ENCODE measurements at regions of chr9 and their contacts with region 1.

Region 1: GRCh38 chr9:35071814-35072460 is 488 bp downstream of the VCP start:
- DNase-seq: peak; percentile 87 to 94 (median 91)
- ATAC-seq: peak; percentile 43 to 85 (median 79)
- H3K4me3 ChIP-seq: peak overlapping the region; percentile 82 to 100 (median 96)
- H3K27ac ChIP-seq: peak overlapping the region; percentile 99 to 100 (median 100)
- H3K4me1 ChIP-seq: peaks cover 12 to 48% (median 36%) of the 10 kb centered on the region in 12 donors
- H3K27me3 ChIP-seq: no peaks in the 10 kb centered on the region
- CTCF ChIP-seq: peak; percentile 13 to 65 (median 46)
- POLR2A ChIP-seq: peak; percentile 2 to 67

Region 2: DNA sequence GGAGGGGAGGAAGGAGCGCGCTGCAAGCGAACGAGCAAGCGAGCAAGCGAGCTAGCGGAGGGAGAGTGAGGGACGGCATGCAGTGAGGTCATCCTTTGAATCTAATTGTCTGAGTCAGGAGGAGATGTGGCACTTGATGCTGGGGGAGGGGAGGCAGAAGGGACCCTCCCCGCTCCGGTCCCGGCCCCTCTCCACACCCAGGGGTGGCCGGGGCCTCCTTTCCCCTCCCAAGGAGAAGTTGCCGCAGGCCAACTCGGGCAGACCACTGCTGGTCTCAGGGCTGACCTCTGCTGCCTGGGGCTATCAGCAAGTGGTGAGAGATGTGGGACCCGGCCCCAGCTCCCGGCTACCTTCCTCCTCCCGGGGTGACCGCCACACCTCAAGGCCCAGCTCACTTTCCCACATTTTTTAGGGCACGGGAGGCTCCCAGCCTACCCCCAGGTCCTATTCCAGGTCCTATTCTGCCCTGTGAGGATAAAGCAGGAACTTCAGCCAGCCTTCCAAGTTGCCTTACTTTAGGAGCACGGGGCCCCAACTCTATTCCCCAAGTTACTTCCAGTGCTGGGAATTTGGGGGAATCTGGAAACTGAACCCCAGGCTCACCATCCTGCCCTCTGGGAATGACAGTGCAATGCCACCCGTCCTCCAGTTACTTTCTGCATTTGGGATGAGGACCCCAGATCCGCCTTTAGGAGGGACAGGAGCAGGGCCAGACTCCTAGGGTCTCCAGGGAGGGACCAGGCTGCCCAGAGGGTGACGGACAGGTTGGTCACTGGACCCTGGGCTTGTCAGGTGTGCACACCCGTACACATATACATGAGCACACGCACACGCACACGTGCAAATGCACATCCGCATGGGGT is 493.5 kb before region 1 on chr9:
- intact Hi-C with region 1: no loop called
- DNase-seq: peak in 2 of 5 donors; percentile 36 to 70
- ATAC-seq: peak in 3 of 4 donors; percentile 22 to 68 (median 51)
- H3K4me3 ChIP-seq: peak overlapping the region in 10 of 12 donors; percentile 6 to 45 (median 38)
- H3K27ac ChIP-seq: peak overlapping the region in 1 of 12 donors; percentile 5
- H3K4me1 ChIP-seq: peaks cover 0 to 30% (median 10%) of the 10 kb centered on the region in 12 donors
- H3K27me3 ChIP-seq: peaks cover 0 to 51% (median 15%) of the 10 kb centered on the region in 9 donors
- CTCF ChIP-seq: no peak
- POLR2A ChIP-seq: no peak

Region 3: DNA sequence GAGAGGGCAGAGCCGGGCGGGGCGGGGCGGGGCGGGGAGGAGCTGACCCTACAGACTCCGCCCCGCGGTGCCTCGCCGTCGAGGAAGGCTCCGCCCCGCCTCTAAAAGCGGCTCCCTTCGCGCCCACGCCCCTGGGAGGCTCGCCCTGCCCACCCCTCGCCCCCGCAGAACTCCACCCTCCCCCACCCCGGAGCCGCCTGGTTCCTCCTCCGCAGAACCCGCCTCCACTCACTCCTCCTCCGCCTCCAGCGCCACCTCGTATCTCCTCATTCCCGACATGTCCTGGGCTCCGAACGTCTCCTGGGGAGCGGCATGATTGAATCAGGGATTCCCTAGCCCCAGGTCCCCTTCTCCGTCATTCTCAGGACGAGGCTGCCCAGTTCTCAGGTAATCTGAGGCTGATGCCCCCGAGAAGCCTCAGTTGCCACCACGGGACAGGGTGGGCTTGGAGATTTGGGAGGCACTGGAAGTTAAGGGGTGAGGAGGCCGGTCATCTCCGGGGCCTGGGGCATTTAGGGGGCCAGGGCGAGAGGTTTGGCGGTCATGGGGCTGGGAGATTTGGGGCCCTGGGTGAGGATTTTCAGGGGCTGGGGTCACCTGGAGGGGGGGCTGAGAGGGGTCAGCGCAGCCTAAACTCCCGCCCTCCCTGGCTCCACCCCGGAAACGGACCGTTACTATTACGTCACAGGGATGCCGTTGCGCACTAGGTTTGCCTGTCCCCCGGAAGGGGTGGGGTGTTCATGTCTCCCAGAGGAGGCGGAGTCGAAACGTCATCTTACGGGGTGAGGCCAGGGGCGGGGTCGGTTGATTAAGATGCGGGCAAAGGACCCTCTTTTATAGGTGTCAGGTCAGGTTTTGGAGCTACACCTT is 406.3 kb before region 1 on chr9:
- intact Hi-C with region 1: loop called in 1 of 10 experiments (anchors 10 kb)
- DNase-seq: peak; percentile 94 to 97 (median 96)
- ATAC-seq: peak; percentile 89 to 93 (median 90)
- H3K4me3 ChIP-seq: peak overlapping the region; percentile 54 to 91 (median 74)
- H3K27ac ChIP-seq: peak overlapping the region; percentile 88 to 99 (median 98)
- H3K4me1 ChIP-seq: peaks cover 0 to 24% (median 12%) of the 10 kb centered on the region in 12 donors
- H3K27me3 ChIP-seq: no peaks in the 10 kb centered on the region
- CTCF ChIP-seq: peak in 2 of 12 donors; percentile 4 to 20
- POLR2A ChIP-seq: peak in 1 of 2 donors; percentile 35

Region 4: DNA sequence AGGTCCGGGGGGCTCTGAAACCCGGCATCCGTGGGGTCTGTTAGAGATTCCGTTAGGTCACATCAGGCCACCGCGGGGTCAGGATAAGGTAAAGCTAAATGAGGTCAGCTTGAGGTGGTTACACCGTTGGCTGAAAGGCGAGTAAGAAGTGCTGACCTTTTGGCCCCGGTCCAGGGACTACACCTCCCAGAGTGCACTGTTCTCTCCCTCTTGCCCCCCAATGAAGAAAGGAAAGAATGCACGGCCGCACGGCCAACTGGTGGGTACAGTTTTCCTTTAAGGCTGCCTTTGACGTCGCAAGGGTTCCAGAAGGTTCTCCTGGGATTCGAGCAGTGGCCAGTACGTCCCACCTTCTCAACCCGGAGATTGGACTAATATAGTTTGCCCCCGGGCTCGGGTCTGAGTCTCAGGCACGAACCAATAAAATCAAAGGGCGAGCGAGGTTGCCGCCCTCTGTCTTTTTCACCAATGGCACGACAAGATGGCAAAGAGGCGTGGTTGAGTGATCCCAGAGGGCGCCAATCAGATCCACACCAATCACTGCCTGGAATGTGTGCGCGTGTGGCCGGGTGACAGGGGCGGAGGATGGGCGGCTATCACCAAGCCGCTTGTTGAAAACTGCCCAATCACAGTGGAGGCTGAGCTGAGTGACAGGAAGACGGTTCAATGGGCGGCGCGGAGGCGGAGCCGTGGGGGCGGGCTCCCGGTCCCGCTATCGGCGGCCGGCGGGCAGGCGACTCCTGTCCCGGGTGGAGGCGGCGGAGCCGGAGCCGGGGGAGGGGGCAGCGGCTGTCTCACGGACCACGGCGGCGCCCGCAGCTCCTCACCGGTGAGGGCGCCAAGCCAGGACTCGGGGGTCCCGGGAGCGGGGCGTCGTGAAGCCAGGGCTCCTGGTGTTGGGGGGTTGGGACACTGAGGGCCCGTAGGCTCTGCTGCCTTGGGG is 82.7 kb before region 1 on chr9 and contains the start of gene DNAJB5:
- intact Hi-C with region 1: loop called in 5 of 10 experiments (anchors 1 to 5 kb)
- DNase-seq: peak; percentile 98 to 100 (median 99)
- ATAC-seq: peak; percentile 76 to 86 (median 84)
- H3K4me3 ChIP-seq: peak within 1 kb of the TSS; percentile 65 to 98 (median 82)
- H3K27ac ChIP-seq: peak within 1 kb of the TSS in 11 of 12 donors; percentile 86 to 99 (median 97)
- H3K4me1 ChIP-seq: peaks cover 8 to 54% (median 46%) of the 10 kb centered on the region in 12 donors
- H3K27me3 ChIP-seq: no peaks in the 10 kb centered on the region
- CTCF ChIP-seq: peak in 1 of 12 donors; percentile 17
- POLR2A ChIP-seq: peak; percentile 89 to 93
- total RNA-seq, gene DNAJB5: 33.6 to 134 (median 88.5) TPM

Region 5: DNA sequence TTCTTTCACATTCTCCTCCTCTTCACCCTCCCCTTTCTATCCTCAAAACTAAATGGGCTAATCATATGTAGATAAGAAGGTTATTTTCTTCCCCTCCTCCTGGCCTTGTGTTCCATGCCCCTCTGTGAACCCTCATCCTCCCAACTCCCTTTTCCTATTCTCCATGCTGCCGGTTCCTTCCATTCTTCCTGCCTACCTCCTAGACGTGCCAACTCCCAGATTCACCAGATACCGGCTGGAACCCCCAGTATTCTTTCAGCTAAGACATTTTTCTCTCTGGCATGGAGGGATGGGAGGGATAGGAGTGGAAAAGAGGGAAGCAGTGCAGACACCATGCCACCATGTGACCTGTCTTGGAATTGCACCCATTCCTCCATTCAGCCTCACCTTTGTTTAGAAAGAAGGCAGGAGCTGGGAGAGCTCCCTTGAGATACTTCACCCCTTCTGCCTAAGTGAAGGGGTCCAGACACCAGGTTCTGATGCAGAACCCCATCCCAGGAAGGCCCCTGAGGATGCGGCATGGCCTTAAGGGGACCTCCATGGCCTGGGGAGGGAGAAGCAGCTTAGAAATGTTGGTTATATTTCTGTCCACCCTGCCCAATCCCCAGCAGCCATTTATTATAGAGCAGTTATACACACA is 77.6 kb before region 1 on chr9:
- intact Hi-C with region 1: loop called in 5 of 10 experiments (anchors 1 to 5 kb)
- DNase-seq: peak in 1 of 5 donors; percentile 41
- ATAC-seq: peak in 1 of 4 donors; percentile 13
- H3K4me3 ChIP-seq: peak overlapping the region in 10 of 12 donors; percentile 20 to 50 (median 32)
- H3K27ac ChIP-seq: peak overlapping the region in 11 of 12 donors; percentile 89 to 99 (median 96)
- H3K4me1 ChIP-seq: peaks cover 8 to 88% (median 59%) of the 10 kb centered on the region in 12 donors
- H3K27me3 ChIP-seq: no peaks in the 10 kb centered on the region
- CTCF ChIP-seq: peak in 11 of 12 donors; percentile 21 to 73 (median 48)
- POLR2A ChIP-seq: no peak

Region 6: GRCh38 chr9:35014517-35014916 is 57.4 kb before region 1 on chr9:
- intact Hi-C with region 1: no loop called
- DNase-seq: no peak
- ATAC-seq: no peak
- H3K4me3 ChIP-seq: no peak overlapping the region
- H3K27ac ChIP-seq: no peak overlapping the region
- H3K4me1 ChIP-seq: no peaks in the 10 kb centered on the region
- H3K27me3 ChIP-seq: no peaks in the 10 kb centered on the region
- CTCF ChIP-seq: no peak
- POLR2A ChIP-seq: no peak

Region 7: DNA sequence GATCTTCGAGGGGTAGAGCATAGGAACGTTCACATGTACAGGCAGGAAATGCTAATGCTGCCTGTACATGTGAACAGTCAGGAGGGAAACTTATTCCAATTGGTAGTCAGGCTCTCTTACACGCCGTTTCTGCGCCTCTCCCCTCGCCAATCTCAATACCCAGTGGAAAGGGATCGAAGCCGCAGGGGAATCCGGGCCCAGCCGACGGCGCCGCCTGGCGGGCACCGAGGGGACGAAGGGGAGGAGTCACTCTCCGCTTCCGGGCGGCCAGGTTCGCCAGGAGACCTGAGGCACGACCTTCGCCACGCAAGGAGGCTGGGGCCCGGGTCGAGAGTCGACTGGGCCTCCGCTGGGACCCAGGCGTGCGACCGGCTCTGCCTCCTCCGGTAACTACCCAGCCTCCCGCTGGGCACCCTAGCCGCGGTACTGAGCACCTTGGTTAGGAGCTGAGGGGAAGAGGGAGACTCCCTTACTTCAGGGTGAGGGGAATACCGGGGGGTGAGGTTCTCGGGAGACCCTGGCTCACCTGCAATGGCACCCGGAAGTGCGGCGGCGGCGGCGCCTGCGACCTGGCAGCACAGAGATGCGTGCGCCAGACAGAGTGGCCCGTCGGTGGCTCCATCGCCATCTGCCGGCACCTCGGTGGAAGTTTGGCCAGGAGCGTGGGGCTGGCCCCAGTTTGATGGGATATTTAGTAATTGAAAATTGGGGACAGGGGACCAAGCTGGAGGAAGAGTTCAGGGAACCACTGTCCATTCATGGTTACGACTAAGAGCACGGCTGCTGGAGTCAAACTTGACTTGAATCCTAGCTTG is 24.3 kb after region 1 on chr9 and contains the start of gene PIGO:
- intact Hi-C with region 1: loop called in 1 of 10 experiments (anchors 2 kb)
- DNase-seq: peak; percentile 88 to 95 (median 91)
- ATAC-seq: peak; percentile 73 to 96 (median 94)
- H3K4me3 ChIP-seq: peak within 1 kb of the TSS; percentile 53 to 100 (median 90)
- H3K27ac ChIP-seq: peak within 1 kb of the TSS; percentile 86 to 99 (median 96)
- H3K4me1 ChIP-seq: peaks cover 0 to 16% (median 9%) of the 10 kb centered on the region in 12 donors
- H3K27me3 ChIP-seq: no peaks in the 10 kb centered on the region
- CTCF ChIP-seq: peak; percentile 57 to 79 (median 74)
- POLR2A ChIP-seq: peak in 1 of 2 donors; percentile 37
- total RNA-seq, gene PIGO: 7.0 to 13.1 (median 9.1) TPM

Region 8: GRCh38 chr9:35102926-35103659 is 31.2 kb after region 1 on chr9 and contains the start of gene STOML2:
- intact Hi-C with region 1: loop called in 1 of 10 experiments (anchors 2 kb)
- DNase-seq: peak; percentile 94 to 97 (median 95)
- ATAC-seq: peak; percentile 95 to 98 (median 96)
- H3K4me3 ChIP-seq: peak within 1 kb of the TSS; percentile 61 to 91 (median 76)
- H3K27ac ChIP-seq: peak within 1 kb of the TSS; percentile 71 to 94 (median 88)
- H3K4me1 ChIP-seq: peaks cover 0 to 25% (median 20%) of the 10 kb centered on the region in 12 donors
- H3K27me3 ChIP-seq: no peaks in the 10 kb centered on the region
- CTCF ChIP-seq: no peak
- POLR2A ChIP-seq: peak in 1 of 2 donors; percentile 77
- total RNA-seq, gene STOML2: 114 to 162 (median 130) TPM

Region 9: GRCh38 chr9:35116898-35117551 is 45.1 kb after region 1 on chr9:
- intact Hi-C with region 1: no loop called
- DNase-seq: peak; percentile 92 to 95 (median 93)
- ATAC-seq: peak; percentile 74 to 81 (median 76)
- H3K4me3 ChIP-seq: peak overlapping the region in 11 of 12 donors; percentile 49 to 81 (median 65)
- H3K27ac ChIP-seq: peak overlapping the region in 11 of 12 donors; percentile 26 to 98 (median 88)
- H3K4me1 ChIP-seq: peaks cover 0 to 46% (median 34%) of the 10 kb centered on the region in 12 donors
- H3K27me3 ChIP-seq: no peaks in the 10 kb centered on the region
- CTCF ChIP-seq: peak; percentile 93 to 98 (median 95)
- POLR2A ChIP-seq: no peak

Region 10: DNA sequence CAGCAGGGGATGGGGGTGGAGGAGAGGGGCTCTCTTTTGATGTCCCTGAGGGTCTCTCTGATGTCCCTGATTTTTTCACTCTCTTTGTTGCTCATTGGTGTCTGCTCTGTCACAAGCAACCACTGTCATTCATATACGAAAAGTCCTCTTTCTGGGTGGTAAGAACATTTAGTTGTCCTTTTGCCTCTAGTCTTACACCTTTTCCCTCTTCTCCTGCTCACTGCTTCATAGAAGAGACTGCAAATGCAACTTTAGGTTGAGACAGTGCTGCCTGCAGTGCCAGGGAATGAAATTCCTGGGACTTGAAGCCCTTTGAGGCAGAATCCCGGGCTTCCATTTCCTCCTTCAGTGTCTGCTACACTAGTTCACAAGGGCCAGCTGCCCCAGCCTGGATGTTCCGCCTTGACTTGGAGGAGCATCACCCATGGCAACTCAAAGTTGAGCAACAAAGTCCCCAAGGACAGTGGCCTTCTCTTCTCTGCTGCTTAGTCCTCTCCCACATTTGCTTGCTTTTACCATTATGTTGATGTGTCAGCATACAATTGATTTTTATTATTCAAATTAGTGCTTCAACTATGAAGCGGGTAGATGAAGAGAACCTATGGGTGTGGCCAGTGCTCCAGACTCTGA is 323.3 kb after region 1 on chr9:
- intact Hi-C with region 1: no loop called
- DNase-seq: no peak
- ATAC-seq: peak in 1 of 4 donors; percentile 42
- H3K4me3 ChIP-seq: no peak overlapping the region
- H3K27ac ChIP-seq: no peak overlapping the region
- H3K4me1 ChIP-seq: peaks cover 0 to 9% (median 0%) of the 10 kb centered on the region in 12 donors
- H3K27me3 ChIP-seq: no peaks in the 10 kb centered on the region
- CTCF ChIP-seq: no peak
- POLR2A ChIP-seq: no peak

Measured in heart left ventricle (tissue), 16 donors.